GM18951 (cell line): ENCODE measurements at regions of chrX and their contacts with region 1.

Region 1: DNA sequence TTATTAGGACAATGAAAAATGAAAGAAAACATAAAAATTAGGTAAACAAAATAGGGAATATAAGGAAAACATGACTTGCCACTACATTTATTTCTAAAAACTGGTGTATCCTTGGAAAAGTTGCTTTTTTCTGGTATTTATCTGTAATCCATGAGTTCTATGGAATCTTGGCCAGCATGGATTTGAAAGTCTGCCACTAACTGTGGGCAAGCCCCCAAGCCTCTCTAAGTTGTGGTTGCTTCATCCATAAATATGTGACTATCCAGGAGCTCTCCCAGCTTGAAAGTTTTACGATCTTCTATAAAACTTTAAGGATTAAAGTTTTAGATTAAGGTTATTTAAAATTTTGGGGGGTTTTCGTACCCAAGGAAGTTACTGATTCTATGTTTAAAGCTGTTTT is 21.8 kb downstream of the RPS6KA3 start:
- POLR2A ChIP-seq: no peak

Region 2: GRCh38 chrX:20362268-20363267 is 117.6 kb after region 1 on chrX:
- in situ Hi-C with region 1: no loop called
- POLR2A ChIP-seq: no peak

Region 3: GRCh38 chrX:20437683-20438082 is 192.8 kb after region 1 on chrX:
- in situ Hi-C with region 1: loop called (anchors 10 kb)
- POLR2A ChIP-seq: no peak